ENCODE measurements at regions of chr19 and their contacts with region 1.

Region 1: GRCh38 chr19:2016041-2016807 is 710 bp upstream of the BTBD2 start:
- DNase-seq: peak; percentile 90
- H3K4me3 Mint-ChIP-seq: peak overlapping the region; percentile 63
- H3K27ac Mint-ChIP-seq: no peak overlapping the region
- H3K4me1 Mint-ChIP-seq: peaks cover 20% of the 10 kb centered on the region
- H3K27me3 Mint-ChIP-seq: no peaks in the 10 kb centered on the region
- CTCF ChIP-seq: no peak

Region 2: DNA sequence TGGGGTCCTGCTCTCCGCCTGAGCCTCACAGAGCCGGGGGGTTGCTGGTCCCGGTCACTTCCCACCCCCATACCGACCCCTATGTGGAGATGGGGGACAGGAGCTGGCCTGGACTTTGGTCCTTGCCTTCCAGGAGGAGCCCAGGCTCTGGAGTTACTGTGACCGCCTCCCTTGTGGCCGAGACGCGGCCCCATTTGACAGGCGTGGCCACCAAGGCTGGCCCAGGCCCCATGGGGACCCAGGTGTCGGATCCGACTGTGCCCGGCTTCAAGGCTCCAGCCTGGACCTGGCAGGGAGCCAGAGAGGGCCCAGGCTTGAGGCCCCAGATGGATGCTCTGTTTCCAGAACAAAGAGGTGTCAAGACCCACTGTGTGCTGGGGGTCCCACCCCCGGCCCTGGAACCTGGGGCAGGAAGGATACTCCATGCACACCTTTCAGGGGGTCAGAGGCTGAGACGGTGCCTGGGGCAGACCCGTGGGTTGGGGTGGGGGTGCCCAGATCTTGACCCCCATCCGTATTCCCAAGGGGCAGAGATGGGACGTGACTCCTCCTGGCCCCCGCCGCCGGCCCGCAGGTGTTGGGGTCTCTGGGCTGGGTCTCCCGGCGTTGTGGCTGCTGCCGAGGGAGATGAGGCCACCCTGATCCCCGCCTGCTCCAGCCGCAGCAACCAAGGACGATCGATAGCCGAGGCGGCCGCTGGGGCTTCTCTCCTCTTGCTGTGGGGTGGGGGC is 316.1 kb before region 1 on chr19:
- CTCF ChIA-PET with region 1: no interaction called
- POLR2A ChIA-PET with region 1: no interaction called
- intact Hi-C with region 1: no loop called
- DNase-seq: no peak
- H3K4me3 Mint-ChIP-seq: no peak overlapping the region
- H3K27ac Mint-ChIP-seq: no peak overlapping the region
- H3K4me1 Mint-ChIP-seq: peaks cover 6% of the 10 kb centered on the region
- H3K27me3 Mint-ChIP-seq: peaks cover 26% of the 10 kb centered on the region
- CTCF ChIP-seq: no peak

Region 3: DNA sequence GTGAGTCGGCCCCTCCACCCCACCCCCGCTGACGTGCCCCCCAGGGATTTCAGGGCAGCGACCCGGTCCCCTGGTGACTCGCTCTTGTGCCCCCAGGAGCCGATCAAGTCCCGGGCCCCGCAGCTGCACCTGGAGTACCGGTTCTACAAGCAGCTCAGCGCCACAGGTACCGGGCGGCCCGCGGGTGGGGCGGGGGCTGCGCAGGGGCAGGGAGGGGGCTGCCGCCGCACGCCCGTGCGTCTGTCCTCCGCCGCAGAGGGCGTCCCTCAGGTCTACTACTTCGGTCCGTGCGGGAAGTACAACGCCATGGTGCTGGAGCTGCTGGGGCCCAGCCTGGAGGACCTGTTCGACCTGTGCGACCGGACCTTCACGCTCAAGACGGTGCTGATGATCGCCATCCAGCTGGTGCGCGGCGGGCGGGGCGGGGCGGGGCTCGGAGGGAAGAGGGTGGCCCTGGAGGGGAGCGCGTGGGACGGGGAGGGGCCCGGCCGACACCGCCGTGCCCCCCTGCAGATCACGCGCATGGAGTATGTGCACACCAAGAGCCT is 37.8 kb before region 1 on chr19:
- CTCF ChIA-PET with region 1: no interaction called
- POLR2A ChIA-PET with region 1: no interaction called
- intact Hi-C with region 1: no loop called
- DNase-seq: no peak
- H3K4me3 Mint-ChIP-seq: no peak overlapping the region
- H3K27ac Mint-ChIP-seq: no peak overlapping the region
- H3K4me1 Mint-ChIP-seq: no peaks in the 10 kb centered on the region
- H3K27me3 Mint-ChIP-seq: no peaks in the 10 kb centered on the region
- CTCF ChIP-seq: no peak

Region 4: GRCh38 chr19:2041683-2042484 is 25.7 kb after region 1 on chr19:
- CTCF ChIA-PET with region 1: interaction called, 3 read pairs
- POLR2A ChIA-PET with region 1: interaction called, 4 read pairs
- intact Hi-C with region 1: loop called (anchors 2 kb)
- DNase-seq: peak; percentile 97
- H3K4me3 Mint-ChIP-seq: peak overlapping the region; percentile 60
- H3K27ac Mint-ChIP-seq: peak overlapping the region; percentile 35
- H3K4me1 Mint-ChIP-seq: peaks cover 8% of the 10 kb centered on the region
- H3K27me3 Mint-ChIP-seq: no peaks in the 10 kb centered on the region
- CTCF ChIP-seq: no peak

Region 5: DNA sequence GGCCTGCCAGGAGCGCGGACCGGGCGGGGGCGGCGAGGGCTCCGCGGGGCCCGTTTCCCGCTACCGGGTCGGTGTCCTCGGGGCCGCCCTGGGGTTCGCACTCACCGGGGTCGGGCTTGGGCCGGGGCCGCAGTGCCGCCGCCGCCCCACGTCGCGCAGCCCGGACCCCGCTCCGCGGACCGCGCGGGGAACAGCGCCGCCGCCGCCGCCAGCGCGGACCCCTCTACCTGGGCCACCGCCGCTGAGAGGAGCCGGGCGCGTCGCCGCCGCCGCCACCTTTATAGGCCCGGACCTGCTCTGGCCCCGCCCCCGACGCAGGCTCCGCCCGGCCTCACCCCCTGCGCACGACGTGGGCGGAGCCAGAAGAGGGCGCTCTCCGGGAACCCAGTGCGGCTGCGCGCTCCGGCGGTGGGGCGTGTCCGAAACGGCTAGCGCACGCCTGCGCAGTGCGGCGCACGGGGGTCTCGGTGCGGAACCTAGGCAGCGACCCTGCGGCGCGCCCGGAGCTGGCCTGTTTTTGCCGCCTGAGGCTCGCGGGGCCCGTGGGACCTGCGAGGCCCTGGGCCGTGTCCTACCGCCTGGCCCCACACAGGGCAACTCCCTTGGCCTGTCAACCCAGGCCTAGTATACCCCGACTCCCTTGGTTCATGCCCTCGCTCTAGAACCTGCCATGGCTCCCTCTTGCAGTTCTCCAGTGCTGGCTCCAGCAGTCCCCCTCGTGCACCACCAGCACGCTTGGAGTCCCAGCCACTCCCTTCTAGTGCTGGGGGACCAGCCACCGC is 35.0 kb after region 1 on chr19 and contains the start of gene MKNK2:
- CTCF ChIA-PET with region 1: interaction called, 5 read pairs
- POLR2A ChIA-PET with region 1: interaction called, 3 read pairs
- intact Hi-C with region 1: loop called (anchors 1 kb)
- DNase-seq: peak; percentile 90
- H3K4me3 Mint-ChIP-seq: peak within 1 kb of the TSS; percentile 92
- H3K27ac Mint-ChIP-seq: peak within 1 kb of the TSS; percentile 81
- H3K4me1 Mint-ChIP-seq: peaks cover 22% of the 10 kb centered on the region
- H3K27me3 Mint-ChIP-seq: no peaks in the 10 kb centered on the region
- CTCF ChIP-seq: peak; percentile 22
- total RNA-seq, gene MKNK2: 146 and 224 TPM in 2 replicates

Region 6: DNA sequence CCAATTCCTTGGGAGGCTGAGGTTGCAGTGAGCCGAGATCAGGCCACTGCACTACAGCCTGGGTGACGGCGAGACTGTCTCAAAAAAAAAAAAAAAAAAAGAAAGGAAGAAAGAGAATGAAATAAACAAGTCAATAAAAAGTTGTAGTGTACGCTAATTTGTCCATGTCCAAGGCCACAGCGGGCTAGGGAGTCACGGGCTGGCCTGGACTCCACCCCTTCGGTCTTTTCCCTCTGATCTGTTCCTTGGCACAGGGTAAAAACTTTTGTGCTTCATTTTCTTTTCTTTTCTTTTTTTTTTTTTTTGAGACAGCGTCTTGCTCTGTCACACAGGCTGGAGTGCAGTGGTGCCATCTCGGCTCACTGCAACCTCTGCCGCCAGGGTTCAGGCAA is 54.2 kb after region 1 on chr19:
- CTCF ChIA-PET with region 1: interaction called, 17 read pairs
- POLR2A ChIA-PET with region 1: interaction called, 5 read pairs
- intact Hi-C with region 1: loop called (anchors 1 kb)
- DNase-seq: no peak
- H3K4me3 Mint-ChIP-seq: no peak overlapping the region
- H3K27ac Mint-ChIP-seq: no peak overlapping the region
- H3K4me1 Mint-ChIP-seq: no peaks in the 10 kb centered on the region
- H3K27me3 Mint-ChIP-seq: no peaks in the 10 kb centered on the region
- CTCF ChIP-seq: no peak

Region 7: GRCh38 chr19:2087012-2087620 is 70.9 kb after region 1 on chr19:
- CTCF ChIA-PET with region 1: interaction called, 4 read pairs
- POLR2A ChIA-PET with region 1: interaction called, 3 read pairs
- intact Hi-C with region 1: loop called (anchors 2 kb)
- DNase-seq: peak; percentile 96
- H3K4me3 Mint-ChIP-seq: peak overlapping the region; percentile 22
- H3K27ac Mint-ChIP-seq: peak overlapping the region; percentile 63
- H3K4me1 Mint-ChIP-seq: peaks cover 42% of the 10 kb centered on the region
- H3K27me3 Mint-ChIP-seq: no peaks in the 10 kb centered on the region
- CTCF ChIP-seq: no peak

Region 8: GRCh38 chr19:2151339-2152229 is 135.4 kb after region 1 on chr19 and contains the start of gene AP3D1:
- CTCF ChIA-PET with region 1: interaction called, 4 read pairs
- POLR2A ChIA-PET with region 1: no interaction called
- intact Hi-C with region 1: loop called (anchors 5 kb)
- DNase-seq: peak; percentile 100
- H3K4me3 Mint-ChIP-seq: peak within 1 kb of the TSS; percentile 78
- H3K27ac Mint-ChIP-seq: peak within 1 kb of the TSS; percentile 55
- H3K4me1 Mint-ChIP-seq: peaks cover 16% of the 10 kb centered on the region
- H3K27me3 Mint-ChIP-seq: no peaks in the 10 kb centered on the region
- CTCF ChIP-seq: no peak
- total RNA-seq, gene AP3D1: 172 and 181 TPM in 2 replicates

Measured in MCF 10A (cell line).